Endothelial cell of umbilical vein (primary cell): ENCODE measurements at regions of chr11 and their contacts with region 1.

Region 1: GRCh38 chr11:67468835-67469811 is at the start of gene TMEM134:
- DNase-seq: peak; percentile 88
- H3K4me3 ChIP-seq: peak within 1 kb of the TSS; percentile 64 to 79 (median 73)
- H3K27ac ChIP-seq: peak within 1 kb of the TSS; percentile 37
- H3K4me1 ChIP-seq: peaks cover 14% of the 10 kb centered on the region
- H3K27me3 ChIP-seq: no peaks in the 10 kb centered on the region
- CTCF ChIP-seq: peak; percentile 27 to 65
- POLR2A ChIP-seq: peak; percentile 90
- total RNA-seq, gene TMEM134: 33.4 and 41.6 TPM in 2 replicates

Region 2: GRCh38 chr11:67420646-67421420 is 48.3 kb before region 1 on chr11:
- CTCF ChIA-PET with region 1: no interaction called
- POLR2A ChIA-PET with region 1: no interaction called
- dilution Hi-C with region 1: no loop called
- intact Hi-C with region 1: loop called (anchors 2 kb)
- DNase-seq: peak; percentile 92
- H3K4me3 ChIP-seq: peak overlapping the region in 2 of 3 experiments; percentile 37 to 56
- H3K27ac ChIP-seq: peak overlapping the region; percentile 51
- H3K4me1 ChIP-seq: peaks cover 4% of the 10 kb centered on the region
- H3K27me3 ChIP-seq: peaks cover 0 to 4% of the 10 kb centered on the region in 2 experiments
- CTCF ChIP-seq: no peak
- POLR2A ChIP-seq: peak; percentile 66

Region 3: GRCh38 chr11:67439321-67439883 is 29.7 kb before region 1 on chr11:
- CTCF ChIA-PET with region 1: interaction called, 3 read pairs
- POLR2A ChIA-PET with region 1: no interaction called
- dilution Hi-C with region 1: no loop called
- intact Hi-C with region 1: loop called (anchors 1 kb)
- DNase-seq: peak; percentile 8
- H3K4me3 ChIP-seq: no peak overlapping the region
- H3K27ac ChIP-seq: no peak overlapping the region
- H3K4me1 ChIP-seq: peaks cover 6% of the 10 kb centered on the region
- H3K27me3 ChIP-seq: no peaks in the 10 kb centered on the region
- CTCF ChIP-seq: peak in 1 of 2 donors; percentile 13
- POLR2A ChIP-seq: peak; percentile 13

Region 4: DNA sequence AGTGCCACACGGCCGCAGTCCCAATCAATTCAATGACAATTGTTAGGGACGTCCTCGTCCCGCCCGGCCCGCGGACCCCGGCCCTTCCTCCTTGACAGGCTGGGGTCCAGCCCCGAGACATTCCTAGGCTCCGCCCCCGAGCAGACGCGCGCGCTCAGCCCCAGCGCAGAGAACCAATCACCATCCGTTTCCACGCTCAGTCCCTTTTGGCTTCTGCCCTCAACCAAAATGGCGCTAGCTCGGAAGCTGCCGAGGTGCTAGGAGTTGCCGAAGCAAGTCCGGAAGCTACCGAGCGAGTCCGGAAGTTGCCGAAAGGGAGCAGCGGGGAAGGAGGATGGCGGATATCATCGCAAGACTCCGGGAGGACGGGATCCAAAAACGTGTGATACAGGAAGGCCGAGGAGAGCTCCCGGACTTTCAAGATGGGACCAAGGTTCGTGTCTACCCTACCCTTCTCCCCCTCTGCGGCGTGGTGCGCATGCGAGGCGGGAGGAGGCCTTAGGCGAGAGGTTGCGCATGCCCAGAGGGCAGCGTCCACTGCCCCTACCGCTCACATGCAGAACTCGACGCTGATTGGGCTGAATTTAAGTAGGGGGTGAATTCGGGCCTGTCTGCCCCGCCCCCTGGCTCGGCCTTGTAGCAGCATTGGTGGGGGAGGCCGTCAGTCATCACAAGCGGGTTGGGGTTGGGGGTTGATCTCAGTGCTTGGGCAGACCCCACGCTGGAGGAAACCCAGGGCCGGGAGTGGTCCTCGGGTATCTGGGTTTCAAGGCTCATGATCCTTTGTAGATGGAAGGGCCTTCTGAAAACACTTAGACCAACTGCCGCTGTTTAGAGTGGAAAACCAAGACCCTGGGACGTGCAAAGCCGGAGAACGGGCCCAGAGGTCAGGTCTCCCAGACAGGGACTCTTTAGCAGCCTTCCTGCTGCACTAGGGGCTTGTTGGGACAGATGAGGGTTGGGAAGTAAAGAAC is 14.0 kb after region 1 on chr11 and contains the start of gene AIP:
- CTCF ChIA-PET with region 1: interaction called, 4 read pairs
- POLR2A ChIA-PET with region 1: no interaction called
- dilution Hi-C with region 1: no loop called
- intact Hi-C with region 1: loop called (anchors 1 kb)
- DNase-seq: peak; percentile 98
- H3K4me3 ChIP-seq: peak within 1 kb of the TSS; percentile 29 to 72 (median 46)
- H3K27ac ChIP-seq: peak within 1 kb of the TSS; percentile 40
- H3K4me1 ChIP-seq: no peaks in the 10 kb centered on the region
- H3K27me3 ChIP-seq: no peaks in the 10 kb centered on the region
- CTCF ChIP-seq: peak in 1 of 2 donors; percentile 7
- POLR2A ChIP-seq: peak; percentile 73
- total RNA-seq, gene AIP: 46.3 and 46.5 TPM in 2 replicates